AG04450 (cell line): ENCODE measurements at regions of chr11 and their contacts with region 1.

Region 1: GRCh38 chr11:92941676-92942571 is 27.5 kb upstream of the MTNR1B start:
- DNase-seq: no peak
- H3K4me3 ChIP-seq: no peak overlapping the region
- H3K27ac ChIP-seq: no peak overlapping the region
- H3K27me3 ChIP-seq: no peaks in the 10 kb centered on the region
- CTCF ChIP-seq: peak; percentile 79

Region 2: GRCh38 chr11:92362989-92363388 is 578.9 kb before region 1 on chr11:
- CTCF ChIA-PET with region 1: no interaction called
- POLR2A ChIA-PET with region 1: no interaction called
- DNase-seq: no peak
- H3K4me3 ChIP-seq: no peak overlapping the region
- H3K27ac ChIP-seq: no peak overlapping the region
- H3K27me3 ChIP-seq: no peaks in the 10 kb centered on the region
- CTCF ChIP-seq: no peak

Region 3: DNA sequence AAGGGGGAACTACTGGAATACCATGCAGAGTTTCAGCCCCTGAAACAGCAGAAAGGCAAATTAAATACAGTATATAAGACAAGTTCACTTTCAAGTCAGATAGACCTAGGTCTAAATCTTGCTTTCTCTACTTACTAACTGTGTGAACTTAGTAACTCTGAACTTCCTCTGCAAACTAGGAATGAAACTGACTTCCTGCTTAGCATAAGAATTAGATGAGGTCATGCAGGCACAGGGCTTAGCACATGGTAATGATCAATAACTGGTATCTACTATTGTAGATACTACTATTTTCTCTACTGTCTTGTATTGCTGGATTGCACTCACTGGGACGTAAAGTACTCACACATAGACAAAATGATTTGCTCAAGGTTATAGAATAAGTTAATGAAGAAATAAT is 24.0 kb before region 1 on chr11:
- CTCF ChIA-PET with region 1: no interaction called
- POLR2A ChIA-PET with region 1: no interaction called
- DNase-seq: no peak
- H3K4me3 ChIP-seq: no peak overlapping the region
- H3K27ac ChIP-seq: no peak overlapping the region
- H3K27me3 ChIP-seq: peaks cover 12% of the 10 kb centered on the region
- CTCF ChIP-seq: no peak

Region 4: DNA sequence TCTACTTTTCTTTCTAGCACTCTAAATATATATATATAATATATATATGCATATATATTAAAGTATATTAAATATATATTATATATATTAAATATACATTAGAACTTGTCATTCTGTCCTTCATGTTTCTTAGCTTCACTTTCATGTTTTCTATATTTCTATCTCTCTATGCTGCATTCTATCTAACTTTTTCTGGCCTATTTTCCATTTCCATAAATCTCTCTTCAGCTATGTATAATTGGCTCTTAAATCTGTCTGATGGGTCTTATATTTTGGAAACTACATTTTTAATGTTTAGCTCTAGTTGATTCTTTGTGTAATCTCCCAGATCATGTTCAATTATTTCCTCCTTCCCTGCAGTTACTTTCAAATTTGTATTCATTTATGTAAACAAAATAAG is 99.8 kb after region 1 on chr11:
- CTCF ChIA-PET with region 1: no interaction called
- POLR2A ChIA-PET with region 1: no interaction called
- DNase-seq: no peak
- H3K4me3 ChIP-seq: no peak overlapping the region
- H3K27ac ChIP-seq: no peak overlapping the region
- H3K27me3 ChIP-seq: no peaks in the 10 kb centered on the region
- CTCF ChIP-seq: no peak

Region 5: GRCh38 chr11:93145390-93145915 is 203.5 kb after region 1 on chr11:
- CTCF ChIA-PET with region 1: interaction called, 19 read pairs
- POLR2A ChIA-PET with region 1: no interaction called
- DNase-seq: no peak
- H3K4me3 ChIP-seq: no peak overlapping the region
- H3K27ac ChIP-seq: no peak overlapping the region
- H3K27me3 ChIP-seq: no peaks in the 10 kb centered on the region
- CTCF ChIP-seq: no peak

Region 6: DNA sequence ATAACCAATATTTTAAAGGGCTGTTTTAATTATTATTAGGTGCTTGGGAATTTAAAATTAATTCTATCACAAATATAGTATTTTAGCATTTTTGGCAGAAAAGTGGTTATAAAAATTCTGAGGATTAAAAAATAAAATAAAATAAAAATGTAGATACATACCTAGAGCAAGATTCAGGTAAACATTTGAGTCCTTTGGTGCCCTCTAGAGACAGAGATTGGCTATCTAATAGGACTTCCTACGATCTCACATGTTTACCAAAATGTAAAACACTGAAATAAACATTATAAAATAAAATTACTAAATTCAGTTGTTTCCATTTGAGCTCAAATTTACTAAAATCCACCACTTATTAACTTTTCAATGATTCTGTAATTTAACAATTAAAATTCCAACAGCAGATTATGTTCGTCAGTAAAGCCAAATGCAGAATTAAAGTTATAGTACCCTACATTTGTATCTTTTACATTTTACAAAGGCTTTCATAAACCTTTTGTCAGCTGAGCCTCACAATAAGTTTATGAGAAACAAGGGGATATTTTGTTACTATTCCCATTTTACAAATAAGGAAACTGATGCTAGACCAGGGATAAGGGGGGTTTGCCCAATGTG is 228.1 kb after region 1 on chr11:
- CTCF ChIA-PET with region 1: interaction called, 77 read pairs
- POLR2A ChIA-PET with region 1: no interaction called
- DNase-seq: peak; percentile 13
- H3K4me3 ChIP-seq: no peak overlapping the region
- H3K27ac ChIP-seq: no peak overlapping the region
- H3K27me3 ChIP-seq: no peaks in the 10 kb centered on the region
- CTCF ChIP-seq: peak; percentile 64

Region 7: GRCh38 chr11:93197380-93198214 is 255.7 kb after region 1 on chr11 and contains the start of gene SLC36A4:
- CTCF ChIA-PET with region 1: interaction called, 24 read pairs
- POLR2A ChIA-PET with region 1: no interaction called
- DNase-seq: peak; percentile 93
- H3K4me3 ChIP-seq: peak within 1 kb of the TSS; percentile 72
- H3K27ac ChIP-seq: peak within 1 kb of the TSS; percentile 93
- H3K27me3 ChIP-seq: no peaks in the 10 kb centered on the region
- CTCF ChIP-seq: no peak
- polyA plus RNA-seq, gene SLC36A4: 15.4 and 17.7 TPM in 2 replicates

Region 8: DNA sequence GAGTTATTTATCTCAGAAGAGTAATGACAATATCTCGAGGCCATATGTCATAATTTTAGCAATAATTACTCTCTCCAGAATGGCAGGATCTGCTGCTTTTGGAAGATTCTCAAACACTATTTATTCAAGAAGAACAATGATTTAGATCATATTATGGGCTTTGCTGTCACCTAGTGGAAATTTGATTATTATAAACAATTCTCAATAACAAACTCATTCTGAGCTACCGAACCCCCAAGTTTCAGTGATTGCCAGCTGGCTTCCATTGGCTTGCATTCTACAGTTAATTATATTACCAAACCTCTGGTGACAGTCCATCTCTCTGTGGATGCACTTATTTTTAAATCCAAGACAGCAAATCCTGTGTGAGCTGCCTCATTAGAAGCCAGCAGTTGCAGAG is 283.7 kb after region 1 on chr11:
- CTCF ChIA-PET with region 1: interaction called, 92 read pairs
- POLR2A ChIA-PET with region 1: no interaction called
- DNase-seq: no peak
- H3K4me3 ChIP-seq: no peak overlapping the region
- H3K27ac ChIP-seq: no peak overlapping the region
- H3K27me3 ChIP-seq: peaks cover 3% of the 10 kb centered on the region
- CTCF ChIP-seq: peak; percentile 24; the same call in 1 of the 2 replicates

Region 9: GRCh38 chr11:93234602-93235207 is 292.8 kb after region 1 on chr11:
- CTCF ChIA-PET with region 1: interaction called, 17 read pairs
- POLR2A ChIA-PET with region 1: no interaction called
- DNase-seq: peak; percentile 30
- H3K4me3 ChIP-seq: no peak overlapping the region
- H3K27ac ChIP-seq: no peak overlapping the region
- H3K27me3 ChIP-seq: peaks cover 9% of the 10 kb centered on the region
- CTCF ChIP-seq: peak; percentile 94